ENCODE measurements at regions of chr1 and their contacts with region 1.

Region 1: GRCh38 chr1:59814180-59814900 is 409 bp upstream of the HOOK1 start:
- DNase-seq: peak; percentile 98
- H3K4me3 ChIP-seq: peak overlapping the region; percentile 69 to 96 (median 90)
- H3K27ac ChIP-seq: no peak overlapping the region
- H3K4me1 ChIP-seq: peaks cover 4% of the 10 kb centered on the region
- H3K27me3 ChIP-seq: no peaks in the 10 kb centered on the region
- CTCF ChIP-seq: no peak

Region 2: GRCh38 chr1:59718064-59718988 is 96.0 kb before region 1 on chr1:
- CTCF ChIA-PET with region 1: no interaction called
- dilution Hi-C with region 1: no loop called
- in situ Hi-C with region 1: no loop called
- intact Hi-C with region 1: no loop called
- DNase-seq: peak; percentile 23
- H3K4me3 ChIP-seq: no peak overlapping the region
- H3K27ac ChIP-seq: no peak overlapping the region
- H3K4me1 ChIP-seq: no peaks in the 10 kb centered on the region
- H3K27me3 ChIP-seq: no peaks in the 10 kb centered on the region
- CTCF ChIP-seq: peak; percentile 24 to 40

Region 3: GRCh38 chr1:59767119-59767518 is 47.2 kb before region 1 on chr1:
- CTCF ChIA-PET with region 1: no interaction called
- dilution Hi-C with region 1: no loop called
- in situ Hi-C with region 1: no loop called
- intact Hi-C with region 1: loop called (anchors 5 kb)
- DNase-seq: no peak
- H3K4me3 ChIP-seq: no peak overlapping the region
- H3K27ac ChIP-seq: no peak overlapping the region
- H3K4me1 ChIP-seq: peaks cover 25% of the 10 kb centered on the region
- H3K27me3 ChIP-seq: no peaks in the 10 kb centered on the region
- CTCF ChIP-seq: no peak

Region 4: GRCh38 chr1:59885160-59885832 is 71.0 kb after region 1 on chr1:
- CTCF ChIA-PET with region 1: no interaction called
- dilution Hi-C with region 1: no loop called
- in situ Hi-C with region 1: no loop called
- intact Hi-C with region 1: no loop called
- DNase-seq: no peak
- H3K4me3 ChIP-seq: no peak overlapping the region
- H3K27ac ChIP-seq: no peak overlapping the region
- H3K4me1 ChIP-seq: no peaks in the 10 kb centered on the region
- H3K27me3 ChIP-seq: no peaks in the 10 kb centered on the region
- CTCF ChIP-seq: no peak